ENCODE measurements at regions of chr2 and their contacts with region 1.

Region 1: GRCh38 chr2:30447149-30448045 is at the start of gene LCLAT1:
- DNase-seq: peak; percentile 72 to 91 (median 86)
- ATAC-seq: peak; percentile 89
- H3K4me3 ChIP-seq: peak within 1 kb of the TSS; percentile 89
- H3K4me3 Mint-ChIP-seq: peak within 1 kb of the TSS; percentile 86 to 97 (median 95)
- H3K27ac ChIP-seq: peak within 1 kb of the TSS; percentile 91
- H3K27ac Mint-ChIP-seq: peak within 1 kb of the TSS; percentile 92 to 99 (median 97)
- H3K4me1 ChIP-seq: peaks cover 10 to 18% of the 10 kb centered on the region in 2 donors
- H3K4me1 Mint-ChIP-seq: peaks cover 23 to 56% (median 48%) of the 10 kb centered on the region in 7 donors
- H3K27me3 ChIP-seq: no peaks in the 10 kb centered on the region
- H3K27me3 Mint-ChIP-seq: no peaks in the 10 kb centered on the region
- total RNA-seq, gene LCLAT1: 18.2 to 25.2 (median 22.2) TPM

Region 2: GRCh38 chr2:30208452-30208851 is 238.9 kb before region 1 on chr2:
- CTCF ChIA-PET with region 1: interaction called, 14 read pairs
- POLR2A ChIA-PET with region 1: interaction called, 8 read pairs
- intact Hi-C with region 1: loop called in 1 of 2 experiments (anchors 1 kb)
- DNase-seq: peak in 4 of 9 donors; percentile 19 to 42 (median 28)
- ATAC-seq: peak; percentile 69
- H3K4me3 ChIP-seq: peak overlapping the region; percentile 3
- H3K4me3 Mint-ChIP-seq: peak overlapping the region; percentile 14 to 80 (median 68)
- H3K27ac ChIP-seq: peak overlapping the region; percentile 25
- H3K27ac Mint-ChIP-seq: peak overlapping the region in 8 of 9 donors; percentile 82 to 95 (median 88)
- H3K4me1 ChIP-seq: peaks cover 8 to 33% of the 10 kb centered on the region in 2 donors
- H3K4me1 Mint-ChIP-seq: peaks cover 14 to 44% (median 35%) of the 10 kb centered on the region in 7 donors
- H3K27me3 ChIP-seq: no peaks in the 10 kb centered on the region
- H3K27me3 Mint-ChIP-seq: peaks cover 0 to 7% (median 0%) of the 10 kb centered on the region in 5 donors

Region 3: GRCh38 chr2:30252723-30253701 is 194.4 kb before region 1 on chr2:
- CTCF ChIA-PET with region 1: no interaction called
- POLR2A ChIA-PET with region 1: interaction called, 5 read pairs
- intact Hi-C with region 1: loop called in 1 of 2 experiments (anchors 2 kb)
- DNase-seq: peak in 4 of 9 donors; percentile 38 to 83 (median 53)
- ATAC-seq: peak; percentile 36
- H3K4me3 ChIP-seq: no peak overlapping the region
- H3K4me3 Mint-ChIP-seq: peak overlapping the region; percentile 53 to 79 (median 72)
- H3K27ac ChIP-seq: peak overlapping the region; percentile 86
- H3K27ac Mint-ChIP-seq: peak overlapping the region; percentile 72 to 100 (median 97)
- H3K4me1 ChIP-seq: peaks cover 77 to 93% of the 10 kb centered on the region in 2 donors
- H3K4me1 Mint-ChIP-seq: peaks cover 65 to 99% (median 97%) of the 10 kb centered on the region in 7 donors
- H3K27me3 ChIP-seq: no peaks in the 10 kb centered on the region
- H3K27me3 Mint-ChIP-seq: no peaks in the 10 kb centered on the region

Region 4: DNA sequence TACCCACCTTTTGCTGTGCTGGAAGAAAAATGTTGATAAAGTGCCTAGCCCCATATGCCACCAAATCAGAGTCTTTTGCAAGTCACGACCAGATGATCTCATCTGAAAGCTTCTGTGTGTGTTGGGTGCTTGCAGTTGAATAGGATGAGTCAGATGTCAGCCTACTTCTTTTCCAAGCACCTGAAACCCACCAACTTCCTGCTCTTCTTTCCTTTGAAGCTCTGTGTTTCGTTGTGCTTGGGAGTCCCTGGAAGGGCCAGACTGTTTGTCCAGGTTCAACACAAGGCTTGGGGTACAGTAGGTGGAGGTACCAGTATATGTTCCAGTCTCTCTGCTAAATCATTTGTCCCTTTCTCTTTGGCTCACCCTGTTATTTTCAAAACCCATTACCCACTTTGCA is 37.2 kb before region 1 on chr2:
- CTCF ChIA-PET with region 1: interaction called, 3 read pairs
- POLR2A ChIA-PET with region 1: interaction called, 3 read pairs
- intact Hi-C with region 1: loop called (anchors 5 kb)
- DNase-seq: peak in 1 of 9 donors; percentile 29
- ATAC-seq: no peak
- H3K4me3 ChIP-seq: no peak overlapping the region
- H3K4me3 Mint-ChIP-seq: peak overlapping the region in 2 of 10 donors; percentile 8 to 51
- H3K27ac ChIP-seq: no peak overlapping the region
- H3K27ac Mint-ChIP-seq: peak overlapping the region in 7 of 9 donors; percentile 9 to 74 (median 31)
- H3K4me1 ChIP-seq: peaks cover 0 to 24% of the 10 kb centered on the region in 2 donors
- H3K4me1 Mint-ChIP-seq: peaks cover 22 to 59% (median 42%) of the 10 kb centered on the region in 7 donors
- H3K27me3 ChIP-seq: no peaks in the 10 kb centered on the region
- H3K27me3 Mint-ChIP-seq: no peaks in the 10 kb centered on the region

Region 5: GRCh38 chr2:30436859-30437435 is 10.4 kb before region 1 on chr2:
- CTCF ChIA-PET with region 1: interaction called, 4 read pairs
- POLR2A ChIA-PET with region 1: interaction called, 11 read pairs
- intact Hi-C with region 1: loop called in 1 of 2 experiments (anchors 1 kb)
- DNase-seq: no peak
- ATAC-seq: peak; percentile 33
- H3K4me3 ChIP-seq: no peak overlapping the region
- H3K4me3 Mint-ChIP-seq: no peak overlapping the region
- H3K27ac ChIP-seq: no peak overlapping the region
- H3K27ac Mint-ChIP-seq: peak overlapping the region in 4 of 9 donors; percentile 3 to 34 (median 6)
- H3K4me1 ChIP-seq: peaks cover 0 to 12% of the 10 kb centered on the region in 2 donors
- H3K4me1 Mint-ChIP-seq: peaks cover 14 to 40% (median 23%) of the 10 kb centered on the region in 7 donors
- H3K27me3 ChIP-seq: no peaks in the 10 kb centered on the region
- H3K27me3 Mint-ChIP-seq: no peaks in the 10 kb centered on the region